ENCODE measurements at regions of chr11 and their contacts with region 1.

Region 1: GRCh38 chr11:59753650-59754493 is 1.3 kb upstream of the STX3 start:
- DNase-seq: peak in 1 of 2 experiments; percentile 92
- H3K4me3 ChIP-seq: peak overlapping the region; percentile 88 to 94 (median 89)
- H3K27ac ChIP-seq: no peak overlapping the region
- H3K4me1 ChIP-seq: peaks cover 2 to 11% (median 7%) of the 10 kb centered on the region in 4 experiments; a peak in 6 of 7 replicates
- H3K27me3 ChIP-seq: peaks cover 0 to 6% (median 0%) of the 10 kb centered on the region in 4 experiments; a peak in 1 of 7 replicates
- CTCF ChIP-seq: peak; percentile 76 to 83 (median 78)
- EP300 ChIP-seq: no peak
- POLR2A ChIP-seq: no peak
- RAD21 ChIP-seq: peak; percentile 72 to 74

Region 2: DNA sequence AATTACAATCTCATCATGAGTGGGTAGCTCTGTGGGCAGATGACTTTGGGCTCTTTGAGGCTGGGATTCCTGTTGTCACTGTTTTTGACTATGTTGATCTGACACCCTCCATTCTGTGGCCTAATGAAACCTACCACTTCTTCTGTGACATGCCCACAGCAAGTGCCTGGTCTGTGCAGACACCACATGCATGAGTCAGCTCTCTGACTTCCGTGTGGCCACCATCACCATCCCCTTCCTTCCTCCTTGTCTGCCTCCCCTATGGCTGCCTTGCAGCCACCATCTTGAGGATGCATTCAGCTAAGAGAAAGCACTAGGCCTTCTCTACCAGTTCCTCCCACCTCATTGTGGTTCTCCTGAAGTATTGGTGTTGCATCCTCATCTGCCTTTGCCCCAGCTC is 25.0 kb before region 1 on chr11:
- CTCF ChIA-PET with region 1: no interaction called
- POLR2A ChIA-PET with region 1: no interaction called
- DNase-seq: no peak
- H3K4me3 ChIP-seq: no peak overlapping the region
- H3K27ac ChIP-seq: no peak overlapping the region
- H3K4me1 ChIP-seq: no peaks in the 10 kb centered on the region
- H3K27me3 ChIP-seq: no peaks in the 10 kb centered on the region
- CTCF ChIP-seq: no peak
- EP300 ChIP-seq: no peak
- POLR2A ChIP-seq: no peak
- RAD21 ChIP-seq: no peak

Region 3: GRCh38 chr11:59767225-59767611 is 13.3 kb after region 1 on chr11:
- CTCF ChIA-PET with region 1: interaction called, 36 read pairs
- POLR2A ChIA-PET with region 1: interaction called, 5 read pairs
- DNase-seq: no peak
- H3K4me3 ChIP-seq: no peak overlapping the region
- H3K27ac ChIP-seq: no peak overlapping the region
- H3K4me1 ChIP-seq: no peaks in the 10 kb centered on the region
- H3K27me3 ChIP-seq: no peaks in the 10 kb centered on the region
- CTCF ChIP-seq: no peak
- EP300 ChIP-seq: no peak
- POLR2A ChIP-seq: no peak
- RAD21 ChIP-seq: no peak

Region 4: DNA sequence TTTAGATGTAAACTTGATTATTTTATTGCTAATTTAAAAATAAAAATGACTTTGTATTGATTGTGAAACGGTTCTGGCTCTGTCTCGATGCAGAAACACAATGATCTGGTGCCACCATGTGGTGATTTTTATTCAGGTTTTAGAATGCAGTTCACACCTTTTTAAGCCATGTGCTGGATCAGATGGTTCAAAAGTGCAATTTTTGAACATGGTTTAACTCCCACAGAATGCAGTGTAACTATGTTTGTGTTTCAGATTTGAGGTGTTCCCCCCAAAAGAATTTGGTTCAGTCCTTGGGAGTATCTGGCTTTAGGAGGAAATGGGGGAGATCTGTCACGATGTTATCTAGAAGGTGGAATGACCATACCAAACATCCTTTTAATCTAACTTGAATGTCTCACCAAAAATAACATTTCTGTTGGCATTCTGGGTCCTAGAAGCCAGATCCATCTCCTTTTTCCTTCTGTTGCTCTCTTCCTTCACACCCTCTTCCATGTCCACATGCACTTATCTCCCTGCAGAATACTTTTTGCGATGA is 48.8 kb after region 1 on chr11:
- CTCF ChIA-PET with region 1: interaction called, 48 read pairs
- POLR2A ChIA-PET with region 1: interaction called, 8 read pairs
- DNase-seq: no peak
- H3K4me3 ChIP-seq: no peak overlapping the region
- H3K27ac ChIP-seq: no peak overlapping the region
- H3K4me1 ChIP-seq: no peaks in the 10 kb centered on the region
- H3K27me3 ChIP-seq: no peaks in the 10 kb centered on the region
- CTCF ChIP-seq: peak in 2 of 3 experiments; percentile 42 to 44; a peak in 2 of 4 replicates
- EP300 ChIP-seq: no peak
- POLR2A ChIP-seq: no peak
- RAD21 ChIP-seq: peak; percentile 69 to 72

Region 5: GRCh38 chr11:59810189-59810910 is 56.5 kb after region 1 on chr11 and contains the start of gene MRPL16:
- CTCF ChIA-PET with region 1: interaction called, 23 read pairs
- POLR2A ChIA-PET with region 1: interaction called, 13 read pairs
- DNase-seq: peak; percentile 88 to 93
- H3K4me3 ChIP-seq: peak within 1 kb of the TSS; percentile 79 to 100 (median 90)
- H3K27ac ChIP-seq: peak within 1 kb of the TSS; percentile 87
- H3K4me1 ChIP-seq: peaks cover 0 to 8% (median 2%) of the 10 kb centered on the region in 4 experiments; a peak in 5 of 7 replicates
- H3K27me3 ChIP-seq: no peaks in the 10 kb centered on the region
- CTCF ChIP-seq: peak; percentile 22 to 31 (median 30); a peak in 3 of 4 replicates
- EP300 ChIP-seq: peak in 1 of 2 experiments; percentile 79; a peak in 1 of 3 replicates
- POLR2A ChIP-seq: peak; percentile 67 to 97
- RAD21 ChIP-seq: peak; percentile 26 to 43
- total RNA-seq, gene MRPL16: 76.8 and 79.8 TPM in 2 replicates

Region 6: GRCh38 chr11:59849129-59849528 is 95.3 kb after region 1 on chr11:
- CTCF ChIA-PET with region 1: no interaction called
- POLR2A ChIA-PET with region 1: no interaction called
- DNase-seq: no peak
- H3K4me3 ChIP-seq: no peak overlapping the region
- H3K27ac ChIP-seq: no peak overlapping the region
- H3K4me1 ChIP-seq: peaks cover 0 to 4% (median 2%) of the 10 kb centered on the region in 4 experiments; a peak in 3 of 7 replicates
- H3K27me3 ChIP-seq: no peaks in the 10 kb centered on the region
- CTCF ChIP-seq: no peak
- EP300 ChIP-seq: no peak
- POLR2A ChIP-seq: no peak
- RAD21 ChIP-seq: no peak